HepG2 (cell line): ENCODE measurements at regions of chr19 and their contacts with region 1.

Region 1: GRCh38 chr19:45817010-45817724 is 2.1 kb upstream of the RSPH6A start:
- DNase-seq: peak; percentile 87
- ATAC-seq: peak; percentile 87
- H3K4me3 ChIP-seq: no peak overlapping the region
- H3K27ac ChIP-seq: no peak overlapping the region
- H3K4me1 ChIP-seq: no peaks in the 10 kb centered on the region
- H3K27me3 ChIP-seq: no peaks in the 10 kb centered on the region
- CTCF ChIP-seq: peak; percentile 95
- EP300 ChIP-seq: no peak
- POLR2A ChIP-seq: no peak
- RAD21 ChIP-seq: peak; percentile 80

Region 2: GRCh38 chr19:45827459-45828093 is 10.4 kb after region 1 on chr19:
- CTCF ChIA-PET with region 1: no interaction called
- POLR2A ChIA-PET with region 1: no interaction called
- in situ Hi-C with region 1: no loop called
- intact Hi-C with region 1: no loop called
- DNase-seq: no peak
- ATAC-seq: peak; percentile 38
- H3K4me3 ChIP-seq: no peak overlapping the region
- H3K27ac ChIP-seq: no peak overlapping the region
- H3K4me1 ChIP-seq: no peaks in the 10 kb centered on the region
- H3K27me3 ChIP-seq: no peaks in the 10 kb centered on the region
- CTCF ChIP-seq: no peak
- EP300 ChIP-seq: no peak
- POLR2A ChIP-seq: no peak
- RAD21 ChIP-seq: no peak

Region 3: GRCh38 chr19:46009530-46010510 is 192.7 kb after region 1 on chr19:
- CTCF ChIA-PET with region 1: interaction called, 6 read pairs
- POLR2A ChIA-PET with region 1: no interaction called
- in situ Hi-C with region 1: loop called (anchors 10 kb)
- intact Hi-C with region 1: loop called (anchors 5 kb)
- DNase-seq: peak; percentile 28
- ATAC-seq: peak; percentile 88
- H3K4me3 ChIP-seq: no peak overlapping the region; a peak in 1 of 6 replicates
- H3K27ac ChIP-seq: no peak overlapping the region
- H3K4me1 ChIP-seq: no peaks in the 10 kb centered on the region
- H3K27me3 ChIP-seq: no peaks in the 10 kb centered on the region
- CTCF ChIP-seq: peak; percentile 80
- EP300 ChIP-seq: no peak
- POLR2A ChIP-seq: no peak
- RAD21 ChIP-seq: peak; percentile 20; the same call in 1 of the 2 replicates

Region 4: DNA sequence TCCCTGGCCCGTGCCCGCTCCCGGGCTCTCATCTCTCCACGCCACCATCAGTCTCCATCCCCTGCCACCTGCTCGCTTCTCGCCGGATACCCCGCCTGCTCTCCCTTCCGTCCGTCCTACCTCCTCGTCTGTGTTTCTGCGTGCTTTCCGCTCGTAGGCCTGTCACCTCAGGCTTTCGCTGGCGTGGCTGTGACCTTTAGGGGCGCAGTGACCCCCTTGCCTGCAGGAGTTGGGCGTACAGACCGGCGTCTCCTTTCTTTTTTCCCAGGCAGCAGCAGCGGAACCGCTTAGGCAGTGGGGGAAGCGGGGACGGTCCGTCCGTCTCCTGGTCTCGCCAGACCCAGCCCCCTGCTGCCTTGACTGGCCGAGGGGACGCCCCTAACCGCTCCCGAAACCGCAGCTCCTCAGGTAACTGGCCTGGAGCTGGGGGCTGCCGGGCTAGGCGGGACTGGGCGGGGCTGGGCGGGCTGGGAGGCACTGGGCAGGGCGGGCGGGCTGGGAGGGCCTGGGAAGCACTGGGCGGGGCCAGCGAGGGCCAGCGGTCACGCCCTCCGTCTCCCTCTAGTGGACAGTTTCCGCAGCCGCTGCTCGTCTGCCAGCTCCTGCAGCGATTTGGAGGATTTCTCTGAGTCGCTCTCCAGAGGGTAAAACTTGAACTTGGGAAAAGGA is 199.4 kb after region 1 on chr19:
- CTCF ChIA-PET with region 1: interaction called, 3 read pairs
- POLR2A ChIA-PET with region 1: no interaction called
- in situ Hi-C with region 1: loop called (anchors 10 kb)
- intact Hi-C with region 1: loop called (anchors 5 kb)
- DNase-seq: peak; percentile 43
- ATAC-seq: peak; percentile 85
- H3K4me3 ChIP-seq: peak overlapping the region; percentile 28 to 59 (median 42); a peak in 3 of 6 replicates
- H3K27ac ChIP-seq: no peak overlapping the region
- H3K4me1 ChIP-seq: no peaks in the 10 kb centered on the region
- H3K27me3 ChIP-seq: no peaks in the 10 kb centered on the region
- CTCF ChIP-seq: peak; percentile 80
- EP300 ChIP-seq: no peak
- POLR2A ChIP-seq: no peak
- RAD21 ChIP-seq: no peak